CD4-positive, alpha-beta T cell (primary cell): ENCODE measurements at regions of chr17 and their contacts with region 1.

Region 1: GRCh38 chr17:51120739-51121617 is at the start of gene SPAG9:
- DNase-seq: peak; percentile 77 to 98 (median 86)
- ATAC-seq: peak; percentile 82
- H3K4me3 ChIP-seq: peak within 1 kb of the TSS; percentile 96
- H3K4me3 Mint-ChIP-seq: peak within 1 kb of the TSS; percentile 97
- H3K27ac ChIP-seq: peak within 1 kb of the TSS; percentile 92
- H3K27ac Mint-ChIP-seq: peak within 1 kb of the TSS; percentile 94
- H3K4me1 ChIP-seq: peaks cover 43% of the 10 kb centered on the region
- H3K4me1 Mint-ChIP-seq: peaks cover 54% of the 10 kb centered on the region
- H3K27me3 ChIP-seq: no peaks in the 10 kb centered on the region
- H3K27me3 Mint-ChIP-seq: no peaks in the 10 kb centered on the region
- CTCF ChIP-seq: no peak
- total RNA-seq, gene SPAG9: 60.2 to 64.6 TPM

Region 2: DNA sequence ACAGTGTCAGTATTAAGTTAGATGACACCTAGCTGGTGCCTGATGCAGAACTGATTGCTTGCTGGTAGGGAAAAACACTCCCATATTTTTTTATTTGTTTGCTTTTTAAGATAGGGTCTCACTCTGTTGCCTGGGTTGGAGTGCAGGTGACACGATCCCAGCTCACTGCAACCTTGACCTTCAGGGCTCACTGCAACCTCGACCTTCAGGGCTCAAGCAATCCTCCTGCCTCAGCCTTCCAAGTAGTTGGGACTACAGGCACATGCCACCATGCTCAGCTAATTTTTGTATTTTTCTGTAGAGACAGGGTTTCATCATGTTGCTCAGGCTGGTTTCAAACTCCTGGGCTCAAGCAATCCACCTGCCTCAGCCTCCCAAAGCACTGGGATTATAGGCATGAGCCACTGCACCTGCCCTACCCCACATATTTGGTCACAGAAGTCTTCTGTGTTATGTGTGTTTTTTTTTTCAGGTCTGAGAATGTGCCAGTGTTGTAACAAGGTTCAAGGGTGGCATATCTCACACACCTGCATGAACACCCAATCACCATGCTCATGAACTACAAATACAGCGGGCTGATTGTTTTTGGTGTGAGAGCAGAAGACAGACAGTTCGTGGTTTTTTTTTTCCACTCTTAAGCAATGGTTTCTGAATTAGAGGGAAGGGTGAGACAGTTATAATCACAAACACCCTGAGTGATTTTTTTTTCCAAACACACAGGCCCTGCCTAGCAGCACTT is 23.1 kb before region 1 on chr17:
- CTCF ChIA-PET with region 1: interaction called, 3 read pairs
- POLR2A ChIA-PET with region 1: interaction called, 13 read pairs
- intact Hi-C with region 1: loop called (anchors 1 to 2 kb)
- DNase-seq: no peak
- ATAC-seq: no peak
- H3K4me3 ChIP-seq: no peak overlapping the region
- H3K4me3 Mint-ChIP-seq: no peak overlapping the region
- H3K27ac ChIP-seq: no peak overlapping the region
- H3K27ac Mint-ChIP-seq: no peak overlapping the region
- H3K4me1 ChIP-seq: peaks cover 31% of the 10 kb centered on the region
- H3K4me1 Mint-ChIP-seq: peaks cover 39% of the 10 kb centered on the region
- H3K27me3 ChIP-seq: no peaks in the 10 kb centered on the region
- H3K27me3 Mint-ChIP-seq: no peaks in the 10 kb centered on the region
- CTCF ChIP-seq: no peak

Region 3: DNA sequence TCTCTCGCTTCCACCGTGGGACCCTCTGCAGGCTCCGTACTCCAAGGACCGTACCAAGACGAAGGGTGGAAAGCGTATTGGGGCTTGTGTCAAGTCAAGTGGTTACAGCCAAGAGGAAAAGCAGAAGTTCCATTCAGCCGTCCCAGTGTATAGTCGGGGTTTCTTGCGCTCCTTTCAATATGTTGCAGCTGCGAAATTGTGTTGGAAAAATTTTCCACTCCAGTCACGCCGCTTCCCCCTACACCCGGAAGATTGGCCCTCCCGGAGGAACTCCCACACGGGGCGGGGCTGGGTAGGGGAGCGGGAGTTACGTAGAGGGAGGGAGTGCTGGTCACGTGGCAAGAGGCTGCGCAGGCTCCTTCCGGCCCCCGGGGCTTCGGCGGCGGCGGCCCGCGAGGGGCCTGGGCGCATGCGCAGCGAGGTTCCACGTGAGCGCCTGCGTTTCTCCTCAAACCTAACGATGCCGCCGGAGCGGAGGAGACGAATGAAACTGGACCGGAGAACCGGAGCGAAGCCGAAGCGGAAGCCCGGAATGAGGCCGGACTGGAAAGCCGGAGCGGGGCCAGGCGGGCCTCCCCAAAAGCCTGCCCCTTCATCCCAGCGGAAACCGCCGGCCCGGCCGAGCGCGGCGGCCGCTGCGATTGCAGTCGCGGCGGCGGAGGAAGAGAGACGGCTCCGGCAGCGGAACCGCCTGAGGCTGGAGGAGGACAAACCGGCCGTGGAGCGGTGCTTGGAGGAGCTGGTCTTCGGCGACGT is 139.3 kb after region 1 on chr17 and contains the start of gene UTP18:
- CTCF ChIA-PET with region 1: no interaction called
- POLR2A ChIA-PET with region 1: interaction called, 6 read pairs
- intact Hi-C with region 1: loop called in 1 of 2 experiments (anchors 5 kb)
- DNase-seq: peak; percentile 89 to 99 (median 96)
- ATAC-seq: peak; percentile 87
- H3K4me3 ChIP-seq: peak within 1 kb of the TSS; percentile 90
- H3K4me3 Mint-ChIP-seq: peak within 1 kb of the TSS; percentile 99
- H3K27ac ChIP-seq: peak within 1 kb of the TSS; percentile 96 to 99
- H3K27ac Mint-ChIP-seq: peak within 1 kb of the TSS; percentile 99
- H3K4me1 ChIP-seq: peaks cover 36% of the 10 kb centered on the region
- H3K4me1 Mint-ChIP-seq: peaks cover 85% of the 10 kb centered on the region
- H3K27me3 ChIP-seq: no peaks in the 10 kb centered on the region
- H3K27me3 Mint-ChIP-seq: no peaks in the 10 kb centered on the region
- CTCF ChIP-seq: no peak
- total RNA-seq, gene UTP18: 48.5 to 49.8 TPM